ENCODE measurements at regions of chr7 and their contacts with region 1.

Region 1: GRCh38 chr7:100195222-100195621 is 17.5 kb downstream of the STAG3 start:
- DNase-seq: no peak
- ATAC-seq: no peak
- H3K4me3 Mint-ChIP-seq: no peak overlapping the region
- H3K27ac Mint-ChIP-seq: no peak overlapping the region
- H3K4me1 Mint-ChIP-seq: peaks cover 31% of the 10 kb centered on the region
- H3K27me3 Mint-ChIP-seq: no peaks in the 10 kb centered on the region
- CTCF ChIP-seq: no peak

Region 2: DNA sequence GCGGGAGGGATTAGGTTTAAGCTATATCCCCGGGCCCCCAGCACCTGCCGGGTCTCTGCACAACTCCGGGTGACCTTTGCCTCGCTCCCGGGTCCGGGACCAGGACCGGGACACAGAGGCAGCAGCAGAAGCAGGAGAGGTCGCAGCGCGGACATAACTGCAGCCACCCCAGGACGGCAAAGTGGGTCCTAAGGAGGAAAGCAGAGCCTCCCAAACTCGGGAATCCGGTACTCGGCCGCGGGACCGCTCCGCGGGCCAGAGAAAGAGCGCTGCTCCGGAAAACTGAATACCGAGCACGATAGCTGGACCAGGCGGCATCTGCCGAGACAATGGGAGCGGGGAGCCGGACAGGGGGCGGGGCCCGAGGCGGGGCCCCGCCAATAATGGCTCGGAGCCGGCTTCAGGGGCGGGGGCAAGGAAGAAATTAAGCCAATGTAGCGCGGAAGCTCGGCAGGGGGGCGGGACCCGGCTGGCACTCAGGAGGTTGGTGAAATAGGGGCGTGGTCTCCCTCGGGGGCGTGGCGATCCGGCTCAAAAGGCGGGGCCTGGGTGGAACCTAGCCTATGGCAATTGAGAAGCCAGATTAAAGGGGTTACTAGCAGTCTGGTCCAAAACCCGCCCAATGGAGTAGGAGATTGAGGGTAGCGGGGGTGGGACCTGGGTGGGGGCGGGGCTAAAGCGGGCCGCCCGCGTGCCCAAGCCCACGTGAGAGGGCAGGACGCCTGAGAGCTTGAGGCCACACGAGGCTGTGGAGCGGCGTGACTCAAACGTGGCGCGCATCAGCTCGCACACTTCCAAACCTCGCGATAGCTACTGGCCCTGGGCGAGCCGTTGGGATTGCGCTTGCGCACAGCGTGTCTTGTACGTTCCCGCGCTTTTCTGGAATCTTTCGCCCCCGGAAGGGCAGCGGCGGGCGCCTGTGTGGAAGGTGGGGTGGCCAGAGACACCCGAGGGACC is 17.9 kb before region 1 on chr7 and contains the starts of genes GPC2 and STAG3:
- CTCF ChIA-PET with region 1: interaction called, 17 read pairs
- POLR2A ChIA-PET with region 1: interaction called, 11 read pairs
- intact Hi-C with region 1: no loop called
- DNase-seq: peak; percentile 99
- ATAC-seq: peak; percentile 91
- H3K4me3 Mint-ChIP-seq: peak within 1 kb of the TSS; percentile 76
- H3K27ac Mint-ChIP-seq: peak within 1 kb of the TSS; percentile 25
- H3K4me1 Mint-ChIP-seq: peaks cover 32% of the 10 kb centered on the region
- H3K27me3 Mint-ChIP-seq: no peaks in the 10 kb centered on the region
- CTCF ChIP-seq: no peak
- total RNA-seq, gene GPC2: 3.7 to 4.3 TPM
- total RNA-seq, gene STAG3: 13.2 to 15.8 TPM

Region 3: GRCh38 chr7:100215895-100216294 is 20.7 kb after region 1 on chr7:
- CTCF ChIA-PET with region 1: interaction called, 46 read pairs
- POLR2A ChIA-PET with region 1: interaction called, 9 read pairs
- intact Hi-C with region 1: no loop called
- DNase-seq: no peak
- ATAC-seq: no peak
- H3K4me3 Mint-ChIP-seq: no peak overlapping the region
- H3K27ac Mint-ChIP-seq: peak overlapping the region; percentile 44
- H3K4me1 Mint-ChIP-seq: peaks cover 57% of the 10 kb centered on the region
- H3K27me3 Mint-ChIP-seq: no peaks in the 10 kb centered on the region
- CTCF ChIP-seq: no peak

Measured in activated CD8-positive, alpha-beta T cell treated with anti-CD3 and anti-CD28 coated beads for 36 hours (primary cell).